Heart left ventricle (tissue), 16 donors: ENCODE measurements at regions of chr5 and their contacts with region 1.

Region 1: GRCh38 chr5:126972062-126972895 is 58.1 kb downstream of the MARCHF3 start:
- DNase-seq: no peak
- ATAC-seq: peak in 1 of 4 donors; percentile 18
- H3K4me3 ChIP-seq: no peak overlapping the region
- H3K27ac ChIP-seq: peak overlapping the region in 9 of 12 donors; percentile 53 to 82 (median 69)
- H3K4me1 ChIP-seq: peaks cover 3 to 54% (median 37%) of the 10 kb centered on the region in 12 donors
- H3K27me3 ChIP-seq: no peaks in the 10 kb centered on the region
- CTCF ChIP-seq: no peak
- POLR2A ChIP-seq: no peak

Region 2: DNA sequence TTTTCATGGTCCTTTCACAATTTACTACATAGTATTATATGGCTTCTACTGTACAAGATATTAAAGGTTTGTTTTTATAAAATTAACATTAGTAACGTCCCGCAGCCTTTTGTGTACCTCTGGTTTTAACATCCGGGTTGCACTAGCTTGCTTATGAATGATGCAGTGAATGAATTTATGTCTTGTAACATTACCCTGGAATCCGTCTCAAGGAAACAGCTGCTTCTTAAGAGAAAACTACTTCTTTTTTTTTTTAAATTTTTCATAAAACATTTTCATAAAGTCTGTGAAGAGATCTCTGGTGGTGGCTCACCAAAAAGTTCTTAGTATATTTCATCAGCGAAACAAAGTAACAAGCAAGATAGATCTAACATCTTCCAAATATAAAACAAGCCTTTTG is 34.5 kb after region 1 on chr5:
- intact Hi-C with region 1: loop called in 1 of 10 experiments (anchors 5 kb)
- DNase-seq: no peak
- ATAC-seq: no peak
- H3K4me3 ChIP-seq: peak overlapping the region in 1 of 12 donors; percentile 8
- H3K27ac ChIP-seq: peak overlapping the region in 3 of 12 donors; percentile 3 to 28 (median 17)
- H3K4me1 ChIP-seq: peaks cover 0 to 71% (median 31%) of the 10 kb centered on the region in 12 donors
- H3K27me3 ChIP-seq: no peaks in the 10 kb centered on the region
- CTCF ChIP-seq: no peak
- POLR2A ChIP-seq: no peak